Posterior vena cava (tissue), 2 donors: ENCODE measurements at regions of chr9 and their contacts with region 1.

Region 1: DNA sequence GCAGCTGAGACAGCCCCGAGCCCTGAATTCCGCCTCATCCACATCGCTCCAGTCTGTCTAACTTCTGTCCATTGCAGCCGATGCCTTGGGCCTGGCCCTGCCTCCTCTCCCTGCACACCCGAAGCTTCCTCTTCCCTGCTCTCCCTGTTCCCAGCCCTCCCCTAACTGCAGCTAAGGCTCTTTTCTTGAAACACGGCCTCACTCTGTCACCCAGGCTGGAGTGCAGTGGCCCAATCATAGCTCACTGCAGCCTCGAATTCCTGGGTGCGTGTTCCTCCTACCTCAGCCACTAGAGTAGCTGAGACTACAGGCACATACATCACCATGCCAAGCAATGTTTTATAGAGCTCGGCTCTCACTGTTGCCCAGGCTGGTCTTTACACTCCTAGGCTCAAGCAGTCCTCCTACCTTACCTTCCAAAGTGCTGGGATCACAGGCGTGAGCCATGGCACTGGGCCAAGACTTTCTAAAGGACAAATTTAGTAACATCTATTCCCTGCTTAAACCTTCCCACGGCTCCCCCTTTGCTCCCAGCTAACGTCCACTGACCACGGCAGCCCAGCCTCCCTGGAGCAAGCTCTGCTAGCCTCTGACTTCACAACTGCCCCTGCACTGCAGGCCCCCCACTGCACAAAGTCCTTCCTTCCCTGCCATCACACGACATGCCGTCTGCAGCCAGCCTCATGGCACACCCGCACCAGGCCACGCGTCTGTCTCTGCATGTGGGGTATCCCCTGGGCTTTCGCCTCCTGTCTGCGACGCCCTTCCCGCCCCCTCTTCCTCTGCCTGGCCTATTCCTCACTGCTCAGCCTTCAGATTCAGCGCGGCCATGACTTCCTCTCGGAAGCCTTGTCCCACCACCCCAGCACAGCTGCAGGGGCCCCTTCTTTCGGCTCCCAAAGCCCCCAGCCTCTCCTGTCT is 28.6 kb downstream of the LAMC3 start:
- DNase-seq: peak; percentile 61

Region 2: DNA sequence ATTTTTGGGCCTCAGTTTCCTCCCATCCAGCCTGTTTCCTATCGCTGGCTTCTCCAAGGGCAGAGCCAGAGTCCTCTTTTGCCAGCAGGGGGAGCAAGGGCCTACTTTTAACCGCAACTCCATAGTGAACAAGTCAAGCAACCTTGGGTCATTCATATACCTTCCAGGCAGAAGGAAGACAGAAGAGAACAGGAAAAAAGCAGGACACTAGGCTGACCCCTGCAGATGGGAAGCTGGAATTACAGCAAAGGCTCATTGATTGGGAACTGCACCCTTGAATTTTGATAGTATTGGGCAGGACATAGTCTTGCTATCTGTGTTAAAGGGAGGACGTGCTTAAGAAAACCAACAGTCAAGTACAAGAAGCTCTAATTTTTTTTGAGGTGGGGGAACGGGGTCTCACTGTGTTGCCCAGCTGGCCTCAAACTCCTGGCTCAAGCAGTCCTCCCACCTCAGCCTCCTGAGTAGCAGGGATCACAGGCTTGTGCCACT is 171.1 kb before region 1 on chr9:
- intact Hi-C with region 1: loop called in 1 of 2 experiments (anchors 10 kb)
- DNase-seq: no peak